ENCODE measurements at regions of chr4 and their contacts with region 1.

Region 1: GRCh38 chr4:154743683-154744340 is at the start of gene LRAT:
- DNase-seq: peak; percentile 45
- H3K4me3 Mint-ChIP-seq: peak within 1 kb of the TSS; percentile 85
- H3K27ac Mint-ChIP-seq: no peak within 1 kb of the TSS
- H3K4me1 Mint-ChIP-seq: peaks cover 12% of the 10 kb centered on the region
- H3K27me3 Mint-ChIP-seq: peaks cover 63% of the 10 kb centered on the region
- total RNA-seq, gene LRAT: not detected in 2 replicates

Region 2: GRCh38 chr4:154491341-154492271 is 252.2 kb before region 1 on chr4 and contains the start of gene DCHS2:
- intact Hi-C with region 1: loop called (anchors 5 kb)
- DNase-seq: no peak
- H3K4me3 Mint-ChIP-seq: peak within 1 kb of the TSS; percentile 67
- H3K27ac Mint-ChIP-seq: peak within 1 kb of the TSS; percentile 58
- H3K4me1 Mint-ChIP-seq: peaks cover 15% of the 10 kb centered on the region
- H3K27me3 Mint-ChIP-seq: peaks cover 73% of the 10 kb centered on the region
- total RNA-seq, gene DCHS2: not detected in 2 replicates

Region 3: DNA sequence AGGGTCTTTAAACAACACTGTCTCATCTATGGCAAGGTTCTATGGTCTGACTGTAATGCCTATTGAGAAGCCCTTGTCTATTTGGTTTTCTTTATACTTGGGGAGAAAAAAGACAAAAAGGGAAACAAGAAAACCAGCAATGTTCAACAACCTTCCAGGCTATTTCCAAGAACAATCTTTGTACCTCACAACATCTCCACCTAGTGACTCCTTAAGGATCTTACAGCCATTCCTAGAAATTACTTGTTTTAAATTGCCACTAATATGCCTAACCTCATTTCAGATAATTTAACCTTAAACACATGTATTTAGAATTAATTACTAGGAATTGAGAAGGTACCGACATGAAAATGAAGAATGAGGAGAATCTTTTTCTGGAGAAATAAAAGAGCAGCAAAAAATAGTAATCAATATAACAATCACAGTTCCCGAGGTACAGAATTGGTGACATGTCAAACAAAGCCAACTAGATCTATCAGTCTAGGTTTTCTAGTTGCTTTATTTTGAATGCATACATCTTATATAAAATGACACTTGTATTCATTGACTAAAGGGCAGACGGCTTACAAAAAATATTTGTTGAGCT is 35.6 kb after region 1 on chr4:
- intact Hi-C with region 1: no loop called
- DNase-seq: no peak
- H3K4me3 Mint-ChIP-seq: no peak overlapping the region
- H3K27ac Mint-ChIP-seq: no peak overlapping the region
- H3K4me1 Mint-ChIP-seq: no peaks in the 10 kb centered on the region
- H3K27me3 Mint-ChIP-seq: peaks cover 9% of the 10 kb centered on the region

Region 4: DNA sequence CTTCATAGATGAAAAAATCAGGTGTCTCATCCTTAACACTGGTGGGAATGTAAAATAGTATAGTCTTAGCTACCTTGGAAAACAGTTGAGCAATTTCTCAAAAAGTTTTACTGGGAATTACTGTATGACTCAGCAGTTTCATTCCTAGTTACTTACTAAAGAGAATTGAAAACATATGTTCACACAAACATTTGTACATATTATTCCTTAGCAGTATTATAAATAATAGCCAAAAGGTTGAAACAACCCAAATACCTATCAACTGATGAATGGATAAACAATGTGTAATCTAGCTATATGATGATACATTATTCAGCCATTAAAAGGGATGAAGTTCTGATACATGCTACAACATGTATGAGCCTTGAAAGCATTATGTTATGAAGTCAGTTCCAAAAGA is 79.0 kb after region 1 on chr4:
- intact Hi-C with region 1: no loop called
- DNase-seq: no peak
- H3K4me3 Mint-ChIP-seq: no peak overlapping the region
- H3K27ac Mint-ChIP-seq: no peak overlapping the region
- H3K4me1 Mint-ChIP-seq: no peaks in the 10 kb centered on the region
- H3K27me3 Mint-ChIP-seq: peaks cover 2% of the 10 kb centered on the region

Region 5: GRCh38 chr4:155376387-155377268 is 632.8 kb after region 1 on chr4 and contains the start of gene MAP9:
- intact Hi-C with region 1: loop called (anchors 1 kb)
- DNase-seq: peak; percentile 82
- H3K4me3 Mint-ChIP-seq: peak within 1 kb of the TSS; percentile 82
- H3K27ac Mint-ChIP-seq: peak within 1 kb of the TSS; percentile 60
- H3K4me1 Mint-ChIP-seq: peaks cover 19% of the 10 kb centered on the region
- H3K27me3 Mint-ChIP-seq: peaks cover 4% of the 10 kb centered on the region
- total RNA-seq, gene MAP9: 5.9 and 6.2 TPM in 2 replicates

Region 6: GRCh38 chr4:155667568-155668511 is 924.0 kb after region 1 on chr4:
- intact Hi-C with region 1: loop called (anchors 5 kb)
- DNase-seq: no peak
- H3K4me3 Mint-ChIP-seq: peak overlapping the region; percentile 90
- H3K27ac Mint-ChIP-seq: no peak overlapping the region
- H3K4me1 Mint-ChIP-seq: peaks cover 20% of the 10 kb centered on the region
- H3K27me3 Mint-ChIP-seq: peaks cover 68% of the 10 kb centered on the region

Region 7: DNA sequence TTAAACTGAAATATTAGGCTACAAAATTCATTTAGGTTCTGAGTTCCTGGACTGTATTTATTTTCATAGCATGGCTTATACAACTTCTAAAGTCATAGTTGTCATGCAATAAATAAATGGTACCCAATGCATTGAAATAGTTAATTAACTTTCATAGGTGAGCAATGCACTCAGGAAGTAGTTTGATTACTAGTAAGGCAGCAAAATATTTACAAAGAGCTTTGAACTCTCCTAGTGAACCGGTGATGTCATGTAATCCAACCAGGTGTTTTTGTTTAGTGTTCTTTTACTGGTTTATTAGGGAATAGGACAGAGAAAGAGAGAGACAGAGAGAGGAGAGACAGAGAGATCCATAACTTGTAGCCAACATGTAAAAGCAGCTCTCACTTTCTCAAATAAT is 1438.5 kb after region 1 on chr4:
- intact Hi-C with region 1: no loop called
- DNase-seq: no peak
- H3K4me3 Mint-ChIP-seq: no peak overlapping the region
- H3K27ac Mint-ChIP-seq: no peak overlapping the region
- H3K4me1 Mint-ChIP-seq: no peaks in the 10 kb centered on the region
- H3K27me3 Mint-ChIP-seq: no peaks in the 10 kb centered on the region